ENCODE measurements at regions of chr2 and their contacts with region 1.

Region 1: DNA sequence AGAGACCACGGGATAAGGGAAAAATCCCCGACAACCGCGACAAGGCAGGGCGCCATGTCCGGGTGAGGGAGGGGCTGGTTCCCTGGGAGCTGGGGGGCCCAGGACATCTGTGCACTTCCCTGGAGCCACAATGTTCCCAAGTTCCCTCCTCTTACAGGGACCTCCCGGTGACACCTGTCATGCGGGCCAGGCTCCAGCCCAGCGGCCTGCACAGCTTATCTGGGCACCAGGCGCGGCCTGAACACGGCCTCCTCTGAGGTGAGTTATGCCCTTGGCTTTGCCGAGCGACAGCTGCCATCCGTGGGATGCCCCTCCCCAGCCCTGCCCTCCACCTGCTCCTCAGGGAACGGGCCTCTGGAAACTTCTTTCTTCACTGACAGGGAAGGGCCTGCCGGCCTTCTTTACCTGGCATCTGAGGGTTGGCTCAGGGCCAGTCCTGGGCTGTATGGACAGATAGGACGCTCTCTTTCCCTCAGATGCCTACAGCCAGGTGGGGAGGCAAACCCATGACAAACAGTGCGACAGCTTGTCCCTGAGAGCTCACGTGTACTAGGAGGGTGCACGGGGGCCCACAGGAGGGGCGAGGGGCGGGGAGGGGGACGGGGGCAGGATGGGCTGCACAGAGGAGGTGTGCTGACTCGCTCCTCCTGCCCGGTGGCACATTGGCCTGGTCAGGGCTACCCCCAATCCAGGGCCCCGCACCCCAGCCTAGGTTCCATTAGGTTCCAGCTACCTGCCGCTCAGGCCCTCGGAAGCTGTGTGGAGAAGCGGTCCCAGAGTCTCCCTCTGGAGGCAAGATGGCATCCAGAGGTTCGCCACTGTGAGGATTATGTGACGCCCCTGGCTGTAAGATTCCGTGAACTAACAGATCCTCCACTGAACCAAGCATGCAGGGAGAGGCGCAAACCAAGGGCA is 34.9 kb upstream of the HPCAL1 start:
- DNase-seq: no peak
- H3K4me3 ChIP-seq: no peak overlapping the region
- H3K4me3 Mint-ChIP-seq: no peak overlapping the region
- H3K27ac ChIP-seq: no peak overlapping the region
- H3K27ac Mint-ChIP-seq: no peak overlapping the region
- H3K4me1 ChIP-seq: peaks cover 7% of the 10 kb centered on the region
- H3K4me1 Mint-ChIP-seq: peaks cover 1 to 7% (median 4%) of the 10 kb centered on the region in 4 donors
- H3K27me3 ChIP-seq: no peaks in the 10 kb centered on the region
- H3K27me3 Mint-ChIP-seq: no peaks in the 10 kb centered on the region

Region 2: GRCh38 chr2:10162586-10163497 is 105.0 kb before region 1 on chr2:
- CTCF ChIA-PET with region 1: no interaction called
- POLR2A ChIA-PET with region 1: no interaction called
- intact Hi-C with region 1: no loop called
- DNase-seq: no peak
- H3K4me3 ChIP-seq: no peak overlapping the region
- H3K4me3 Mint-ChIP-seq: no peak overlapping the region
- H3K27ac ChIP-seq: no peak overlapping the region
- H3K27ac Mint-ChIP-seq: no peak overlapping the region
- H3K4me1 ChIP-seq: peaks cover 7% of the 10 kb centered on the region
- H3K4me1 Mint-ChIP-seq: peaks cover 9 to 17% (median 13%) of the 10 kb centered on the region in 4 donors
- H3K27me3 ChIP-seq: no peaks in the 10 kb centered on the region
- H3K27me3 Mint-ChIP-seq: no peaks in the 10 kb centered on the region

Region 3: DNA sequence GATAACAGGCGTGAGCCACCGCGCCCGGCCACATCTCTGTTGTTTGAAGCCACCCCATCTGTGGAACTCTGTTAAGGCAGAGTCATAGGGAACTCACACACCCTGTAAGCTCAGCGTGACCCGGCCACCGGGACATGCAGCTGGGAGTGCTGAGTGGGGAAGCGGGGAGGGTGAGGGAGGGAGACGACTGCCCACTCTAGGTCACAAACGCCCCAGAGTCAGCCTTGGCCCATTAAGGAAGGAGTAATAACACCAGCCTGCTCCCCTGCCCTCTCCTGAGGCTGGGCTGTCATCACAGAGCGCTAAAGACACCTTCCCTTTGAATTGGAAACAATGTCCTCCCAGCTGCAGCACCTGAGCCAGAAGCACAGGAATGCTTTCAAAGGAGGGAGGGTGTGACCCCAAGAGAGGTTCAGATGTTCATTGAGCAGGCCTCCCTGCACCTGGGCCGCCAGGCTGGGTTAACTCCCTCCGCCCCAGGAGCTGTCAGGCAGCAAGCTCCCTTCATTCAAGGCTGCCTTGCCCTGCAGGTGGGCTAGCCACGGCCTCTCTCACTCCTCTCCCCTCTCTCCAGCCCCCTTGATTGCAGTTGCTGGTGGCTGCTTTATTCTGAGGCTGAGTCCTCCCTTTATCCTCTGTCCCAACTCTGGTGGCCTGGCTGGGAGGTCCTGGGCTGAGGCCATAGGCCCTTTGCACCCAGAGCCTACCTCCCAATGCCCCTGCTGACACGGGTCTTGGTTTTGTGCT is 42.3 kb before region 1 on chr2:
- CTCF ChIA-PET with region 1: no interaction called
- POLR2A ChIA-PET with region 1: no interaction called
- intact Hi-C with region 1: no loop called
- DNase-seq: no peak
- H3K4me3 ChIP-seq: no peak overlapping the region
- H3K4me3 Mint-ChIP-seq: no peak overlapping the region
- H3K27ac ChIP-seq: no peak overlapping the region
- H3K27ac Mint-ChIP-seq: no peak overlapping the region
- H3K4me1 ChIP-seq: no peaks in the 10 kb centered on the region
- H3K4me1 Mint-ChIP-seq: no peaks in the 10 kb centered on the region
- H3K27me3 ChIP-seq: no peaks in the 10 kb centered on the region
- H3K27me3 Mint-ChIP-seq: peaks cover 2 to 3% of the 10 kb centered on the region in 2 donors

Region 4: GRCh38 chr2:10302479-10303180 is 34.8 kb after region 1 on chr2 and contains the start of gene HPCAL1:
- CTCF ChIA-PET with region 1: interaction called, 20 read pairs
- POLR2A ChIA-PET with region 1: interaction called, 12 read pairs
- intact Hi-C with region 1: loop called (anchors 1 kb)
- DNase-seq: peak; percentile 79 to 88 (median 85)
- H3K4me3 ChIP-seq: peak within 1 kb of the TSS; percentile 75 to 77
- H3K4me3 Mint-ChIP-seq: peak within 1 kb of the TSS; percentile 97 to 100 (median 98)
- H3K27ac ChIP-seq: peak within 1 kb of the TSS; percentile 65
- H3K27ac Mint-ChIP-seq: peak within 1 kb of the TSS; percentile 87 to 96 (median 94)
- H3K4me1 ChIP-seq: peaks cover 66% of the 10 kb centered on the region
- H3K4me1 Mint-ChIP-seq: peaks cover 56 to 86% (median 72%) of the 10 kb centered on the region in 4 donors
- H3K27me3 ChIP-seq: no peaks in the 10 kb centered on the region
- H3K27me3 Mint-ChIP-seq: no peaks in the 10 kb centered on the region
- total RNA-seq, gene HPCAL1: 77.1 to 80.7 TPM

Region 5: DNA sequence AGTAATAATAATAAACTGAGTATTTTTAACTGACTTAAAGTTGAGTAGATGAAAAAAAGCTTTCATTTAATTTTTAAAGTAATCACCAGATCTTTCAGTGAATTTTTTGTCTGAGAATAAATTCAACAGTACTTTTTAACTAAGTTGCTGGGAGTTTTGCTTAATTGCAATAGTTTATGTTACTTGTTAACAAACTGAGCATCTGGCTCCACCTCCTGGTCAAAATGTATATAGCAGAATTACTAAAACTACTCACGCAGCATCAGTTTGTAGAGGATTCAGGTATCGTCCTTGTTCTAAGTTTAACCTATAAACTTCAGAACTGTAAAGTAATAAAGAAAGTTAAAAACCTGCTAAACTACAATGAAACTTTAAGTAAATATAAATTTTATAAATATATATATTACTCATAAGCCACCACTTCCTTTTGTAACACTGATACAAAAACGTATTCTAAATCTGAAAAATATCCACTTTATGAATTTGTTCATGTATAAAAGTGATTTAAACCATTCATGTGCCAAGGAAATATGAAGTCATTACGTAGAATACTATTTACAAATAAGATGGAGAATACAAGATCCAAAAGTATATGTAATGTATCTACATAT is 400.7 kb after region 1 on chr2:
- CTCF ChIA-PET with region 1: no interaction called
- POLR2A ChIA-PET with region 1: no interaction called
- intact Hi-C with region 1: loop called (anchors 5 kb)
- DNase-seq: peak; percentile 43 to 63 (median 60)
- H3K4me3 ChIP-seq: no peak overlapping the region
- H3K4me3 Mint-ChIP-seq: no peak overlapping the region
- H3K27ac ChIP-seq: no peak overlapping the region
- H3K27ac Mint-ChIP-seq: no peak overlapping the region
- H3K4me1 ChIP-seq: no peaks in the 10 kb centered on the region
- H3K4me1 Mint-ChIP-seq: peaks cover 0 to 4% (median under 1%) of the 10 kb centered on the region in 4 donors
- H3K27me3 ChIP-seq: no peaks in the 10 kb centered on the region
- H3K27me3 Mint-ChIP-seq: no peaks in the 10 kb centered on the region

Measured in CD4-positive, alpha-beta memory T cell (primary cell).